Colonic mucosa (tissue), 4 donors: ENCODE measurements at regions of chr10 and their contacts with region 1.

Region 1: GRCh38 chr10:89701238-89702120 is at the start of gene KIF20B:
- DNase-seq: peak; percentile 97
- H3K4me3 ChIP-seq: peak within 1 kb of the TSS; percentile 63
- H3K27ac ChIP-seq: peak within 1 kb of the TSS; percentile 75
- H3K4me1 ChIP-seq: no peaks in the 10 kb centered on the region
- H3K27me3 ChIP-seq: no peaks in the 10 kb centered on the region
- CTCF ChIP-seq: peak; percentile 48
- total RNA-seq, gene KIF20B: 13.6 to 32.0 TPM

Region 2: GRCh38 chr10:89643431-89644331 is 57.8 kb before region 1 on chr10:
- intact Hi-C with region 1: loop called (anchors 5 kb)
- DNase-seq: peak; percentile 95
- H3K4me3 ChIP-seq: peak overlapping the region; percentile 89
- H3K27ac ChIP-seq: peak overlapping the region; percentile 93
- H3K4me1 ChIP-seq: peaks cover 4% of the 10 kb centered on the region
- H3K27me3 ChIP-seq: no peaks in the 10 kb centered on the region
- CTCF ChIP-seq: no peak